ENCODE measurements at regions of chr5 and their contacts with region 1.

Region 1: DNA sequence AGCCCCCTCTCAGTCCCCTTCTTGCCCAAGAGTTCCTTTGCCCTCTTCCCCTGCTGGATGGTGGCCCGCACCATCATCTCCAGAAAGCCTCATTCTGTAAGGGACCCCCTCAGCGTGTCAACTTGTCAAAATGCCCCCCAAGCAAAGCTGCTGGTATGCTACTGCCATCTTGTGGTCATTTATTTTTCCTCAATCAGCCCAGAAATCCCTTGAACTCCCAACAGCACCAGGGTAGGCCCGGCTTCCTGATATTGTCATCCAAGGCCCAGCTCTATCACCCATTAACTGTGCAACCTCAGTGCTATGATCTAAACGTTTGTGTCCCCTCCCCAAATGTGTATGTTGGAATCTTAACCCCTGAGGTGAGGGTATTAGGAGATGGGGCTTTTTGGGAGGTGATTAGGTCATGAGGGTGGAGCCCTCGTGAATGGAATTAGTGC is 53.2 kb upstream of the FBXW11 start:
- H3K4me3 ChIP-seq: no peak overlapping the region
- H3K27ac ChIP-seq: no peak overlapping the region
- H3K4me1 ChIP-seq: no peaks in the 10 kb centered on the region
- CTCF ChIP-seq: peak; percentile 72

Region 2: DNA sequence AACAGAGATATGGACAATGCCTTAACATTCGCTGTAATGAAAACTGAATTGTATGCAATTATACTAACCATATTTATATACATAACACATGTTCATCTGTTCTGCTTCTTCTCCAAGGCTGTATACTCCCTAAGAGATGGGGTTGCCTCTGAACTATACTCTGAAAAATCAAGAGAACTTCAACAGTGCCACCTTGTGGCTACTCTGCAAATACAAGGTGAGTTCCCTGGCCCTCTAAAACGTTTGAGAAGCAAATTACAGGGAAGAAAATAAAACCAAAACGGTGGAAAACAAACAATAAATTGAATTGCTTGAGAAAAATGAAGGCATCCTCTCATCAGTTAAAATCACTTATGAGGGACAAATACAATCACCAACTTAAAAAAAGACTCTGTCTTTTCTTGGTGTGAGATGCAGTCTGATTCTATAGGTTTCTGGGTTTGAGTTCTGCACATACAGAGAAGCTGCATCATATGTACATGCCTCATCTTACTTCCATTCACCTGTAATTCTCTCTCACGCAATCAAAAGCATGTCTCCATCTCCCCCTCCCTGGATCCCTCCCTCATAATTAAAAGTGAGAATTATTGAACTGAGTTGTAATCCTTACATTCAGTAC is 151.8 kb before region 1 on chr5:
- CTCF ChIA-PET with region 1: interaction called, 65 read pairs
- POLR2A ChIA-PET with region 1: no interaction called
- H3K4me3 ChIP-seq: no peak overlapping the region
- H3K27ac ChIP-seq: no peak overlapping the region
- H3K4me1 ChIP-seq: no peaks in the 10 kb centered on the region
- CTCF ChIP-seq: peak; percentile 38; the same call in 1 of the 2 replicates

Region 3: DNA sequence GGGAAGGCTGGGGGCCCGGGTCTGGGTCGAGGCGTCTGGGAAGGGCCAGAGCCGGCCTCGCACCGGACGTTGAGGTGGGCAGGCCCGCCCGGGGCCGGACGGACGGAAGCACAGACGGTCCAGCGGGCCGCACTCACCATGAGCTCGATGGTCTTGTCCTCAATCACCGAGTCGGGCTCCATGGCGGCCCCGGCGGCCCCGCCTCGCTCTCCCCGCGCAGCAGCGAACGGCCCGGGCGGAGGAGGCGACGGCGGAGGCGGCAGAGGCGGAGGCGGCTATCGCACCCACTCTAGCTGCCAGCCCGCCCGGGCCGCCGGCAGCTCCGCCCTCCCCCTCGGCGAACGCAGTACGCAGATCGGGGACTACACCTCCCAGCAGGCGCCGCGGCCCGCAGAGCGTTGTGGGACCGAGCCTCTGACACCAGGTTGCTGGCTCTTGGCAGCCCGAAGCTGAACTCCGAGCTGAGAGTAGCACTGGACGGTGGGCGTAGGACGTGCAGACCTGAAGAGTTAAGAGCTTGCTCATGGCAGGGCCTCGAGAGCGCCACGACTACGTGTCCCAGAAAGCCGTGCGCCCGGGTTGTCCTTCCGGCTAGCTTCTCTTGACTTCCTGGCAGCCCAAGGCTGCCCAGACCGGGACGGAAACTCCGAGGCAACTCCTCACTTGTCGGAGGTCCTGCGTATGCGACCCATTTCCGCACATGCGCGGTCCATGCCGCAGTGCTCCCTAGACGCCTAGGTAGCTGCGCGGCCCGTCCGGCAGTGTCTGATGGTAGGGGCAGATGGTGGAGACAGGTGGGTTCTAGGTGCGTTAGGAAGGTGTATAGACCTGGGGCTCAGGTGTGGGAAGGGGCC is 53.1 kb before region 1 on chr5 and contains the start of gene FBXW11:
- CTCF ChIA-PET with region 1: interaction called, 12 read pairs
- POLR2A ChIA-PET with region 1: interaction called, 3 read pairs
- H3K4me3 ChIP-seq: peak within 1 kb of the TSS; percentile 90
- H3K27ac ChIP-seq: peak within 1 kb of the TSS; percentile 97
- H3K4me1 ChIP-seq: peaks cover 23% of the 10 kb centered on the region
- CTCF ChIP-seq: no peak

Region 4: DNA sequence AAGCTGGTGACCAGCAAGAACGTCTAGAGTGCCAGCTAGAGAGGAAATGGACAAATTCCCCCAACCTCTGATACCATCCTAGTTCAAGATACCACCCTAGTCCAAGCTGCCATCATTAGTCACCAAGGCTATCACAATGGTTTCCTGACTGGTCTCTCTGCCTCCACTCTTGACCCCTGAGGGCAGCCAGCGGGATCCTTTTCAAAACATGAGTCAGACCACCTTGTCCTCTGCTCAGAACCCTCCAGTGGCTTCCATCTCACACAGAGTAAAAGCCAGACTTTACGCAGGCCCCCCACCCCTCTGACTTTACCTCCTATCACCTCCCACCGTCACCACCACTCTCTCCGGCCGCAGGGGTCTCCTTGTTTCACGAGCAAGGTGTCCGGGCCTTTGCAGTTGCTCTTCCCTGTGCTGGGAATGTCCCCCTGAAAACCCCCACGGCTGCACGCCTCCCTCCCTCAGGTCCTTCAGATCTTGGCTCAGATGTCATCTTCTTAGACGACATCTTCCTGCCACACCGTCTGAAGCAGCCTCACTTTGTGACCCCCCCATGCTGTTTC is 11.1 kb before region 1 on chr5:
- CTCF ChIA-PET with region 1: interaction called, 10 read pairs
- POLR2A ChIA-PET with region 1: no interaction called
- H3K4me3 ChIP-seq: no peak overlapping the region
- H3K27ac ChIP-seq: no peak overlapping the region
- H3K4me1 ChIP-seq: no peaks in the 10 kb centered on the region
- CTCF ChIP-seq: no peak

Region 5: GRCh38 chr5:172293054-172293744 is 233.5 kb after region 1 on chr5:
- CTCF ChIA-PET with region 1: interaction called, 11 read pairs
- POLR2A ChIA-PET with region 1: no interaction called
- H3K4me3 ChIP-seq: no peak overlapping the region
- H3K27ac ChIP-seq: no peak overlapping the region
- H3K4me1 ChIP-seq: peaks cover 4% of the 10 kb centered on the region; the same call in 1 of the 2 replicates
- CTCF ChIP-seq: peak; percentile 85

Region 6: DNA sequence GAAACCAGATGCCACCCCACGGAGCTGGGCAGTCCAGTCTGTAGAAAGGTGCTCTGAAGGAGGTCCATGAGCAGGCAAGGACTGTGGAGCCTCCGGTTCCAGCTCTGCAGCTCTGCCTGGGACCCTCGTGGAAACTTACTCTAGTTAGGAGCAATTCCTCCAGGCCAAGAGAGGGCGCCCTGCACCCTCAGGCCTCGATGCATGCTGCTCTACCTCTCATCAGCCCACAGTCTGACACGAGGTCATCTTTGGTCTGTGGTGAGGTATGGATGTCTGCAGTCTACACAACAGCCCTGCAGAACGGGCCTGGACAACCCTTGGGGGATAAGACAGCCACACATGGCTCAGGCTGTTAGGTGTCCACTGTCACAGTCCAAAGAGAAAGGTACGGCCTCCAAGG is 274.5 kb after region 1 on chr5:
- CTCF ChIA-PET with region 1: no interaction called
- POLR2A ChIA-PET with region 1: no interaction called
- H3K4me3 ChIP-seq: no peak overlapping the region
- H3K27ac ChIP-seq: no peak overlapping the region
- H3K4me1 ChIP-seq: no peaks in the 10 kb centered on the region
- CTCF ChIP-seq: no peak